Caco-2 (cell line): ENCODE measurements at regions of chr12 and their contacts with region 1.

Region 1: GRCh38 chr12:22880807-22881206 is 255.8 kb downstream of the ETNK1 start:
- DNase-seq: no peak
- H3K4me3 ChIP-seq: no peak overlapping the region
- H3K4me3 Mint-ChIP-seq: no peak overlapping the region
- H3K27ac Mint-ChIP-seq: no peak overlapping the region
- H3K4me1 ChIP-seq: no peaks in the 10 kb centered on the region
- H3K4me1 Mint-ChIP-seq: no peaks in the 10 kb centered on the region
- H3K27me3 ChIP-seq: no peaks in the 10 kb centered on the region
- H3K27me3 Mint-ChIP-seq: no peaks in the 10 kb centered on the region
- CTCF ChIP-seq: no peak

Region 2: GRCh38 chr12:22981711-22982110 is 100.9 kb after region 1 on chr12:
- CTCF ChIA-PET with region 1: no interaction called
- POLR2A ChIA-PET with region 1: no interaction called
- intact Hi-C with region 1: loop called (anchors 5 kb)
- DNase-seq: peak in 1 of 2 experiments; percentile 25
- H3K4me3 ChIP-seq: no peak overlapping the region
- H3K4me3 Mint-ChIP-seq: no peak overlapping the region
- H3K27ac Mint-ChIP-seq: no peak overlapping the region
- H3K4me1 ChIP-seq: no peaks in the 10 kb centered on the region
- H3K4me1 Mint-ChIP-seq: no peaks in the 10 kb centered on the region
- H3K27me3 ChIP-seq: no peaks in the 10 kb centered on the region
- H3K27me3 Mint-ChIP-seq: peaks cover 14% of the 10 kb centered on the region
- CTCF ChIP-seq: peak in 1 of 2 experiments; percentile 40

Region 3: DNA sequence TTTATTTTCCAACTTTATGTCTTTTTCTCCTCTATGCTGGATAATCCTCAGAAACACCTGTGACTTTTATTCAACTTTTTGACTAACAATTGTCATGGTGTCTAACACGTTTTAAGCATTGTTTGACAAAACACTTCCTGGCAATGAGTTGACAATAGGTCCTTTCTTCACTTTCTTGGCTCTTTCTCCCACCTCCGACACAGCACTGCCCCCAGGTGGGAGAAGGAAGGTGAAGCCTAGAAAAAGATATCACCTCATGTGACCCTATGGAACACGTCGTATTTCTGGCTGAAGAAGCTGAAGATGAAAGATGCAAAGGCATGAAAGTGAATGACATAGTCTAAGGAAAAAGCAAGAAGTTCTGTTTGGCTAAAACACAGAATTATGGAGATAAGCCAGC is 174.2 kb after region 1 on chr12:
- CTCF ChIA-PET with region 1: no interaction called
- POLR2A ChIA-PET with region 1: no interaction called
- intact Hi-C with region 1: loop called (anchors 1 kb)
- DNase-seq: peak; percentile 50 to 69
- H3K4me3 ChIP-seq: no peak overlapping the region
- H3K4me3 Mint-ChIP-seq: no peak overlapping the region
- H3K27ac Mint-ChIP-seq: no peak overlapping the region
- H3K4me1 ChIP-seq: no peaks in the 10 kb centered on the region
- H3K4me1 Mint-ChIP-seq: no peaks in the 10 kb centered on the region
- H3K27me3 ChIP-seq: no peaks in the 10 kb centered on the region
- H3K27me3 Mint-ChIP-seq: peaks cover 2% of the 10 kb centered on the region
- CTCF ChIP-seq: peak; percentile 68 to 77

Region 4: DNA sequence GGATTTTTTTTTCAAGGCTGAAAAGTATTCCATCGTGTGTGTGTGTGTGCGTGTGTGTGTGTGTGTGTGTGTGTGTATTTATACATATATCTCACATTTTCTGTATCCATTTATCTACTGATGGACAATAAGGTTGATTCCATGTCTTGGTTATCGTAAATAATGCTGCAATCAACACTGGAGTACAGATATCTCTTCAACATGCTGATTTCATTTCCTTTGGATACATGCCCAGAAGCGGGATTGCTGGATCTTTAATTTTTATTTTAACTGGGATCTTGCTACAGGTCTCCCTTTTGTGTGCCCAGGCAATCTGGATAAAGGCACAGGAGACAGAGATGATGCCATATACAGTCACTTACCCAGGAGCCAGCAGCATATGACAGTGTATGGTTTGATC is 730.5 kb after region 1 on chr12:
- CTCF ChIA-PET with region 1: no interaction called
- POLR2A ChIA-PET with region 1: no interaction called
- intact Hi-C with region 1: no loop called
- DNase-seq: no peak
- H3K4me3 ChIP-seq: no peak overlapping the region
- H3K4me3 Mint-ChIP-seq: no peak overlapping the region
- H3K27ac Mint-ChIP-seq: no peak overlapping the region
- H3K4me1 ChIP-seq: no peaks in the 10 kb centered on the region
- H3K4me1 Mint-ChIP-seq: no peaks in the 10 kb centered on the region
- H3K27me3 ChIP-seq: no peaks in the 10 kb centered on the region
- H3K27me3 Mint-ChIP-seq: no peaks in the 10 kb centered on the region
- CTCF ChIP-seq: no peak